Common myeloid progenitor, CD34-positive (primary cell): ENCODE measurements at regions of chr18 and their contacts with region 1.

Region 1: GRCh38 chr18:76476665-76477561 is 18.1 kb downstream of the ZNF516 start:
- DNase-seq: peak; percentile 62 to 82 (median 79)
- H3K4me3 ChIP-seq: peak overlapping the region in 6 of 7 experiments; percentile 35 to 83 (median 56)
- H3K27ac ChIP-seq: peak overlapping the region; percentile 17 to 65
- H3K4me1 ChIP-seq: peaks cover 20 to 61% (median 42%) of the 10 kb centered on the region in 4 experiments
- H3K27me3 ChIP-seq: no peaks in the 10 kb centered on the region

Region 2: DNA sequence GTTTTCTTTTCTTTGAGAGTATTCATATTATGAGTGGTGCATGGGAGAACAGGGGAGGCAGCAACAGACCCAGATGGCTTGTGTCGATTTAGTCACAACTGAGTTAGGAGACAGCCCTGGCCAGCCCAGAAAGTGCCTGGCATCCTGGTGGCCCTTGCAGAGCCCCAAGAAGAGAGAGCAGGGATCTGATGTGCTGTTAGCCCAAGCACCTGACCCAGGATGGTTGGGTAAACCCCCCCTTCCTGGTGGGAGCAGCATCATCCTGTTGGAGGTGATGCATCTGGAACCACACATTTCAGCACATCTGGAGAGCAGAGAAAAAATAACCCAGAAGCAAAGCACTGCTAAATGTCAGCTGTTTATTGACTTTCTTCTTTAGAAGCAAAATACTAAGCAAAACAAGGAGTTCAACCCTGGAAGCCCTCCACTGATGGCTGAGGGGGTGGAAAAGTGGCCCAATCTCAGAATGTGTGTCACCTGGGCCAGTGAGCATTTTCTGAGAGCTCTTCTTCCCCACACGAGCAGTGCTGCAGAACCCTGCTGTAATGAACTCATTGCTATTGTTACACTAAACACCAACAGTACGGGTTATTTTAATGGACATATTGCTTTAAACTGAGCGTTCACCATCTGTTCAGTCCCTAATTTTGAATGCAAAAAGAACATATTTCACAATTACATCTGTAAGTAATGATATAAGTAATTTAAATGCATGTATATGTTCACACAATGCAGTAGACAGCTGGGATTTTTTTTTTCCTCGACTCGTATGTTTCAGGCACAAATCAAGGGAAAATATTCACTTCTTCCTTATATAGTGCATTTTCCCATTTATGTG is 948.8 kb before region 1 on chr18:
- CTCF ChIA-PET with region 1: no interaction called
- POLR2A ChIA-PET with region 1: no interaction called
- DNase-seq: no peak
- H3K4me3 ChIP-seq: no peak overlapping the region
- H3K27ac ChIP-seq: no peak overlapping the region
- H3K4me1 ChIP-seq: no peaks in the 10 kb centered on the region
- H3K27me3 ChIP-seq: no peaks in the 10 kb centered on the region

Region 3: DNA sequence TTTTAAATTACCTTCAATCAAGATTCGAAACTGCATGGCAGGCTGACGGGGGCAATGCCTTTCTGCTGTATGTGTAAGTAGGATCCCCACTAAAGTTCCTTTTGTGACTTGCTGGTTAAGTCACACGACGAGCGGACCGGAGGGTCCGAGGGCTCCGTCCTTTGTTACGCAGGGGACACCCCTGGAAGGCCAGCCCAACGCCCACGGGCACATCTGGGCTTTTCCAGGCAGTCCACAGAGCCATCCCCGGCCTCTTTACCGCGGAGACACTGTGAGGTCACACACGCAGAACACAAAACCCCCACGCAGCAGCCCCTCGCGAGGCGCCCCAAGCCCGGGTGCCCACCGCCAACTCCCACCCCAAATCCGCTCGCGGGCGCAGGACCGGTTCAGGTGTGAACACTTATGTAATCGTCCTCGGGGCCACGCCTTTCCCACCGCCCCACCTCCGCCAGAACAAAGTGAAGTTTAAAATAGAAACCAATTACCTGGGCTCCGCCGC is 13.8 kb after region 1 on chr18:
- CTCF ChIA-PET with region 1: interaction called, 13 read pairs
- POLR2A ChIA-PET with region 1: interaction called, 3 read pairs
- DNase-seq: peak in 2 of 3 donors; percentile 68 to 74
- H3K4me3 ChIP-seq: peak overlapping the region; percentile 55 to 94 (median 79)
- H3K27ac ChIP-seq: peak overlapping the region in 1 of 2 experiments; percentile 68
- H3K4me1 ChIP-seq: peaks cover 19 to 73% (median 37%) of the 10 kb centered on the region in 4 experiments
- H3K27me3 ChIP-seq: no peaks in the 10 kb centered on the region

Region 4: DNA sequence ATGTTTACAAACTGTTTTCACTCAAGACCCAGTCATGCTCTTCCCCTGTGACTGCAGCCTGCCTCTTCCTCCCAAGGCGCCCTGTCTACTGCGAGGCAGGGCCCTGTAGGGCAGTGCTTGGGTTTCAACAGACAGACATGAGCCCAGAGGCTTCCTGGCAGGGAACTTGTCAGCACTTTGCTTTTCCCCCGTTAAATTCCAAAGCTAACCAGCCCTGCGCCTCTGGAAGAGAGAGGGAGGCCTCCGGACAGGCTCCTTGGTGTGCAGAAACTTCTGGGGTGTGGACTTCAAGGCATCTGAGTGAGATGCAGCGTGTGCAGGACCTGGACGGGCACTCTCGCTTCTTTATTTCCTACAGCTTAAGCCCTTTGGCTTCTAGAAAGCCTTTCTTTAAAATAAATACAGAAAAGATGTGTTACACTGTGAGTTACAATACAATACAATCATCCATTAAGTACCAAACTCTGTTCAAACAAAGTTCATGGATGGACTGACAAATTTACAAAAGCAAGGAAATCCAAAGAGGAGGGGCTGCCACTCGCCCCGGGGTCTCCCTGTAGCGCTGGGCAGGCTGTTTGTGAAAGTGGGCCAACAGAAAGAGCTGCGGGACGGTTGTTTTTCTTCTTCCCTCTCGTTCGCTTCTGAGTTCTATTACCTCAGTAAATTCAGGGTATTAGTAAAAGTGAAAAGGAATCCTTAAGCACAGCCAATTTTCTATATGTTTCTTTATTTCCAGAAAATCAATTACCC is 26.9 kb after region 1 on chr18:
- CTCF ChIA-PET with region 1: no interaction called
- POLR2A ChIA-PET with region 1: no interaction called
- DNase-seq: no peak
- H3K4me3 ChIP-seq: no peak overlapping the region
- H3K27ac ChIP-seq: no peak overlapping the region
- H3K4me1 ChIP-seq: no peaks in the 10 kb centered on the region
- H3K27me3 ChIP-seq: no peaks in the 10 kb centered on the region

Region 5: DNA sequence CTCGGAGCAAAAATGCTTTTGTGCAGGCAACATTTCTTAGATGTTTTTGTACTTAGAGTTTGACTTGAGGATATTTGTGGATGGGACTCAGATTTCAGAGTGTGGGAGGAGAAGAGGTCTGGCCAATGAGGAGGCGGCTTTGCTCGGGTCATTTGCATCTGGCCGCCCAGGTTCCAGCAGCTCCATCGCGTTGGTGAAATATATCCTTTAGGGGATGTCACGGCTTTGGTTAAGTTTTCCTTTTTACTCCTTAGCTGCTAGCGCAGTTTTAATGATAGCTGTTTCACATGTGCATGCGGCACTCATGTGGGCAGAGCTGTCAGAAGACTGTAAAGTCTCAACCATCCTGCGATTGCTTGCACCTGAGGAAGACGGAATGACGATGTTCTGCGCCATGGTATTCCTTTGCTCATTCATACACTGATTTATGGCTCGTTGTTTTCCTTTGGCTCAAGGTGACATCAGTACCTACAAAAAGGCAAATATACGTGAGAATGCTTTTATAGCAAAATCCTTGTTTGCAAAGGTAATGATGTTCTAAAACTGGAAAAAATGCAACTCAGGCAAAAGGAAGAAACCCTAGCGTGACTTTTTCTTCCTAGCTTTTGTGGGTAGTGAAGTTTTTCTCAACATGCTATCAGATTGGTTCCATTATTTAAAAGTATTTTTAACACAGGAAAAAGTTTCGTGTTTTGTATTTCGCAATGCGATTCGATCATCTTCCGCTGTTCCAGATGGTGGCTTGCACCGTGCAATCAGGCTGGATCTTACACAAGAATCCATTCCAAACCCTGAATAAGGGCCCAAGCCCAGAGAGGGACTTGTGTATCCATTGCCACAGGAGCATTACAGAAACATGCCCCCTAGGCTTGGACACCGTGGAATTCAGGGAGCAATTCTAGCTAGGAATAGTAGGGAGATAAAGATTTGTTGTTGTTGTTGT is 88.6 kb after region 1 on chr18:
- CTCF ChIA-PET with region 1: no interaction called
- POLR2A ChIA-PET with region 1: no interaction called
- DNase-seq: peak in 2 of 3 donors; percentile 64 to 65
- H3K4me3 ChIP-seq: peak overlapping the region in 5 of 7 experiments; percentile 5 to 63 (median 44)
- H3K27ac ChIP-seq: no peak overlapping the region
- H3K4me1 ChIP-seq: peaks cover 9 to 22% (median 13%) of the 10 kb centered on the region in 4 experiments
- H3K27me3 ChIP-seq: no peaks in the 10 kb centered on the region